ENCODE measurements at regions of chr12 and their contacts with region 1.

Region 1: GRCh38 chr12:50074936-50075807 is 10.0 kb upstream of the SMARCD1 start:
- DNase-seq: peak; percentile 93
- ATAC-seq: peak; percentile 93
- H3K4me3 Mint-ChIP-seq: no peak overlapping the region
- H3K27ac Mint-ChIP-seq: peak overlapping the region; percentile 72; the same call in 1 of the 2 replicates
- H3K4me1 Mint-ChIP-seq: peaks cover 18% of the 10 kb centered on the region
- H3K27me3 Mint-ChIP-seq: peaks cover 8% of the 10 kb centered on the region
- CTCF ChIP-seq: peak; percentile 84

Region 2: DNA sequence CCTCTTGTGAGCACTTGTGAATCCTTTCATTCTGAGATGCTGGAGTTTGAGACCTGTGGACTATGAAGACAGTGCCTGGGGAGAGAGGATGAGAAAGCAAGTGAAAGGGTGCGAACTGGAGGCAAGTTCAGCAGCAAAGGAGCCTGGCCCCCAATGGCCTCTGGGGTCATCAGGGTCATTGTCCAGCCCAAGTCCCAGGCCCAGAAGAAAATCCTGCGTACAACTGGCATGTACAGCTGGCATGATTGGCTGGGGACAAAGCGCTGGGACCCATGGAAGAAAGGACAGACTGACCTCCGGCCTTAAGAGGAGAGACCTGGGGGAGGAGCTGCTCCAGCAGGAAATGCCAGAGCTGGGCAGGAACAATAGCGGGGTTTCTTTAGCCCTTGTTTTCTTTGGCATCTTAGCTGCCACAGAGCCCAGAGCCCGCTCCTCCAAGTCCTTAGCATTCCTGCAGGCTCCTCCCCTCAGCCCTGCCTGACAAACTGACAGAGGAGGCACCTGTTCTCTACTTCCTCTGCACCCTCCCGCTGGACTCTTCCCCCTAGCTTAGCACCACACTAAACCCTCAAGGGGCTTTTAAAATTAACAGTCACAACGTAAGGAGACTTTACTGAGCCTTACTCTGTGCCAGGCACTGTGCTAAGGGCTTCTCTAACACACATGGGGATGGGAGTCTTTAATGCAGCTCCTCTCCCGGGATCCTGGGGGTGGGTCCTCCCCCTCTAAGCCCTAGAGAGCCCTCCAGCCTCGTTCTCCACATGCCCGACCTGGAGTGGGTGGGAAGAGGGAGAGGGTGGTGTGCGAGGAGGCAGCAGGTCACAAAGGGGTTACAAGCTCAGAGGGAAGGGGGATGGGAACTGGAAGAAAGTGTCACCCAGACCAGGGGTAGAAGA is 115.4 kb before region 1 on chr12:
- CTCF ChIA-PET with region 1: interaction called, 219 read pairs
- POLR2A ChIA-PET with region 1: no interaction called
- DNase-seq: peak; percentile 61
- ATAC-seq: peak; percentile 72
- H3K4me3 Mint-ChIP-seq: peak overlapping the region; percentile 65
- H3K27ac Mint-ChIP-seq: no peak overlapping the region
- H3K4me1 Mint-ChIP-seq: peaks cover 24% of the 10 kb centered on the region
- H3K27me3 Mint-ChIP-seq: peaks cover 69% of the 10 kb centered on the region
- CTCF ChIP-seq: no peak

Region 3: DNA sequence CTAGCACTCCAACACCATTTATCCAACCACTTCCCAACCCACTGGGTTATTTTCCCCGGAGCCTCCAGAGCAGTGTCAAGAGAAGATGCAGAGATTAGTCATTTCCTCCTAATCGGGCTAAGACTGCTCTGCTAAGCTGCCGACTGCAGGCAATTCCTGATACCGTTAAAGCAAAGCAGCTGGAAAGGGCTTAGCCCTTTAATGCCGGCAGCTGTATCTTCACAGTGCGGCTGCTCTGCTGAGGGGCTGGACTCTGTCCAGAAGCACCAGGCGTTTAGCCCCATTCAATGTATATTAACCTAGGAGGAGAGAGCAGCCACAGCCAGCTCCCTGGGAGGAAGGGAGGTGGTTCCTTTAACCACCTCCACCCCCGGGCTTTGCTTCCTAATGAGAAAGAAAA is 91.3 kb before region 1 on chr12:
- CTCF ChIA-PET with region 1: interaction called, 10 read pairs
- POLR2A ChIA-PET with region 1: no interaction called
- DNase-seq: no peak
- ATAC-seq: no peak
- H3K4me3 Mint-ChIP-seq: no peak overlapping the region
- H3K27ac Mint-ChIP-seq: no peak overlapping the region
- H3K4me1 Mint-ChIP-seq: peaks cover 26% of the 10 kb centered on the region
- H3K27me3 Mint-ChIP-seq: no peaks in the 10 kb centered on the region
- CTCF ChIP-seq: no peak

Region 4: DNA sequence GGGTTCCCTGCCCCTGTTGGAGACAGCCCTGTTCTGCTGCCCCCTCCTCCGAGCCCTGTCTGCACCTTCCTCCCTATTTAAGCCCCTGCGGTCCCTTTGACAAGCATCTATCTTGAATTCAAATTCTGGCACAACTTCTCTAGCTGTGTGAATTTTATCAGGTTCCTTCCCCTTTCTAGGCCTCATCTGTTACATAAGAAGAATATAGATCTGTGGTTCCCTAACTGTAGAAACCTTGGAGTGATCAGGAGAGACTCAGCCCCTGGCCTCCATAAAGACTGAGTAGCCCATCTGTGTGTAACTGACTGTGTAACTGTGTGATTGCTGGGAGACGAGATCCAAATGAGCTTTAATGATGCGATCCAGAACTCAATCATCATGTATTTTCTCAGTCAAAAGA is 36.8 kb before region 1 on chr12:
- CTCF ChIA-PET with region 1: interaction called, 141 read pairs
- POLR2A ChIA-PET with region 1: no interaction called
- DNase-seq: no peak
- ATAC-seq: no peak
- H3K4me3 Mint-ChIP-seq: no peak overlapping the region
- H3K27ac Mint-ChIP-seq: no peak overlapping the region
- H3K4me1 Mint-ChIP-seq: peaks cover 4% of the 10 kb centered on the region
- H3K27me3 Mint-ChIP-seq: peaks cover 7% of the 10 kb centered on the region; the same call in 1 of the 2 replicates
- CTCF ChIP-seq: no peak

Region 5: GRCh38 chr12:50050410-50051098 is 24.6 kb before region 1 on chr12:
- CTCF ChIA-PET with region 1: interaction called, 77 read pairs
- POLR2A ChIA-PET with region 1: no interaction called
- DNase-seq: peak; percentile 65
- ATAC-seq: peak; percentile 52
- H3K4me3 Mint-ChIP-seq: peak overlapping the region; percentile 68
- H3K27ac Mint-ChIP-seq: no peak overlapping the region
- H3K4me1 Mint-ChIP-seq: peaks cover 16% of the 10 kb centered on the region
- H3K27me3 Mint-ChIP-seq: peaks cover 85% of the 10 kb centered on the region
- CTCF ChIP-seq: no peak

Region 6: DNA sequence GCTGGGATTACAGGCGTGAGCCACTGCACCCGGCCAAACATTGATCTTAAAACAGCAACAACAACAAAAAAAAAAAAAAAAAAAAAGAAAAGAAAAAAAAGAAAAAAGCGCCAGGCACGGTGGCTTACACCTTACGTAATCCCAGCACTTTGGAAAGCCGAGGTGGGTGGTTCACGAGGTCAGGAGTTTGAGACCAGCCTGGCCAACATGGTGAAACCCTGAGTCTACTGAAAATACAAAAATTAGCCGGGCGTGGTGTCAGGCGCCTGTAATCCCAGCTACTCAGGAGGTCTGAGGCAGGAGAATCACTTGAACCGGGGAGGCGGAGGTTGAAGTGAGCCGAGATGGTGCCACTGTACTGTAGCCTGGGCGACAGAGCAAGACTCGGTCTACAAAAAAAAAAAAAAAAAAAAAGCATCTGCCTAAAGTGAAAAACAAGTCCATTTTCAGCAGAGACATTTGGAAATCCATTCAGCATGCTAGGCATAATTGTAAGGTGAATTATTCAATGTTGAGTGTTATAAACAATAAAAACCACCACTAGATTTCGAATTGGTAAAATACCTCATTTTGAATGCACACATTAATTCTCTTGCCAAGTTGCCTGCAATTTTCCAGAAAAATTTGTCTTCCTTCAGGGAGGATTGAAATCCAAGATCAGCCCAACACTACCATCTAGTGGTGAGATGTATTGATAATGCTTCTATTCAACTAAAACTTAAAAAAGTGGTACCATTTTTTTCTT is 100.0 kb after region 1 on chr12:
- CTCF ChIA-PET with region 1: interaction called, 11 read pairs
- POLR2A ChIA-PET with region 1: no interaction called
- DNase-seq: no peak
- ATAC-seq: no peak
- H3K4me3 Mint-ChIP-seq: no peak overlapping the region
- H3K27ac Mint-ChIP-seq: peak overlapping the region; percentile 30; the same call in 1 of the 2 replicates
- H3K4me1 Mint-ChIP-seq: peaks cover 1% of the 10 kb centered on the region
- H3K27me3 Mint-ChIP-seq: no peaks in the 10 kb centered on the region
- CTCF ChIP-seq: peak; percentile 49

Region 7: GRCh38 chr12:50362671-50363070 is 287.5 kb after region 1 on chr12:
- CTCF ChIA-PET with region 1: no interaction called
- POLR2A ChIA-PET with region 1: no interaction called
- DNase-seq: no peak
- ATAC-seq: no peak
- H3K4me3 Mint-ChIP-seq: no peak overlapping the region
- H3K27ac Mint-ChIP-seq: no peak overlapping the region
- H3K4me1 Mint-ChIP-seq: no peaks in the 10 kb centered on the region
- H3K27me3 Mint-ChIP-seq: no peaks in the 10 kb centered on the region
- CTCF ChIP-seq: no peak

Measured in WTC11 (cell line).